ENCODE measurements at regions of chr15 and their contacts with region 1.

Region 1: GRCh38 chr15:60006203-60006862 is 2.2 kb downstream of the FOXB1 start:
- DNase-seq: peak; percentile 37 to 81 (median 69)
- ATAC-seq: peak; percentile 82
- H3K4me3 ChIP-seq: peak overlapping the region; percentile 49
- H3K4me3 Mint-ChIP-seq: peak overlapping the region; percentile 80 to 97 (median 90)
- H3K27ac ChIP-seq: no peak overlapping the region
- H3K27ac Mint-ChIP-seq: peak overlapping the region; percentile 52 to 97 (median 86)
- H3K4me1 ChIP-seq: peaks cover 23 to 27% of the 10 kb centered on the region in 2 donors
- H3K4me1 Mint-ChIP-seq: peaks cover 26 to 52% (median 40%) of the 10 kb centered on the region in 7 donors
- H3K27me3 ChIP-seq: peaks cover 30 to 76% of the 10 kb centered on the region in 2 donors
- H3K27me3 Mint-ChIP-seq: peaks cover 74 to 94% (median 89%) of the 10 kb centered on the region in 5 donors

Region 2: GRCh38 chr15:59797756-59798604 is 208.4 kb before region 1 on chr15:
- CTCF ChIA-PET with region 1: no interaction called
- POLR2A ChIA-PET with region 1: no interaction called
- intact Hi-C with region 1: loop called (anchors 2 kb)
- DNase-seq: no peak
- ATAC-seq: no peak
- H3K4me3 ChIP-seq: peak overlapping the region; percentile 4
- H3K4me3 Mint-ChIP-seq: peak overlapping the region; percentile 44 to 75 (median 62)
- H3K27ac ChIP-seq: peak overlapping the region; percentile 70
- H3K27ac Mint-ChIP-seq: peak overlapping the region; percentile 38 to 96 (median 92)
- H3K4me1 ChIP-seq: peaks cover 22 to 72% of the 10 kb centered on the region in 2 donors
- H3K4me1 Mint-ChIP-seq: peaks cover 28 to 97% (median 88%) of the 10 kb centered on the region in 7 donors
- H3K27me3 ChIP-seq: no peaks in the 10 kb centered on the region
- H3K27me3 Mint-ChIP-seq: peaks cover 0 to 27% (median 0%) of the 10 kb centered on the region in 5 donors

Region 3: GRCh38 chr15:59976480-59977271 is 29.7 kb before region 1 on chr15:
- CTCF ChIA-PET with region 1: no interaction called
- POLR2A ChIA-PET with region 1: interaction called, 4 read pairs
- intact Hi-C with region 1: loop called (anchors 1 kb)
- DNase-seq: peak in 8 of 9 donors; percentile 38 to 90 (median 86)
- ATAC-seq: peak; percentile 98
- H3K4me3 ChIP-seq: no peak overlapping the region
- H3K4me3 Mint-ChIP-seq: peak overlapping the region; percentile 12 to 83 (median 70)
- H3K27ac ChIP-seq: no peak overlapping the region
- H3K27ac Mint-ChIP-seq: peak overlapping the region in 8 of 9 donors; percentile 60 to 80 (median 74)
- H3K4me1 ChIP-seq: peaks cover 21 to 23% of the 10 kb centered on the region in 2 donors
- H3K4me1 Mint-ChIP-seq: peaks cover 13 to 43% (median 38%) of the 10 kb centered on the region in 7 donors
- H3K27me3 ChIP-seq: no peaks in the 10 kb centered on the region
- H3K27me3 Mint-ChIP-seq: peaks cover 0 to 27% (median 0%) of the 10 kb centered on the region in 5 donors

Region 4: GRCh38 chr15:60044636-60045270 is 38.4 kb after region 1 on chr15:
- CTCF ChIA-PET with region 1: no interaction called
- POLR2A ChIA-PET with region 1: no interaction called
- intact Hi-C with region 1: loop called in 1 of 2 experiments (anchors 5 kb)
- DNase-seq: peak in 8 of 9 donors; percentile 33 to 66 (median 45)
- ATAC-seq: peak; percentile 44
- H3K4me3 ChIP-seq: no peak overlapping the region
- H3K4me3 Mint-ChIP-seq: peak overlapping the region in 8 of 10 donors; percentile 21 to 78 (median 50)
- H3K27ac ChIP-seq: no peak overlapping the region
- H3K27ac Mint-ChIP-seq: peak overlapping the region in 5 of 9 donors; percentile 5 to 67 (median 27)
- H3K4me1 ChIP-seq: peaks cover 5% of the 10 kb centered on the region in 2 donors
- H3K4me1 Mint-ChIP-seq: peaks cover 3 to 23% (median 19%) of the 10 kb centered on the region in 7 donors
- H3K27me3 ChIP-seq: no peaks in the 10 kb centered on the region
- H3K27me3 Mint-ChIP-seq: peaks cover 0 to 15% (median 11%) of the 10 kb centered on the region in 5 donors

Region 5: GRCh38 chr15:60079210-60079609 is 72.9 kb after region 1 on chr15:
- CTCF ChIA-PET with region 1: no interaction called
- POLR2A ChIA-PET with region 1: no interaction called
- intact Hi-C with region 1: loop called in 1 of 2 experiments (anchors 5 kb)
- DNase-seq: peak in 1 of 9 donors; percentile 11
- ATAC-seq: no peak
- H3K4me3 ChIP-seq: no peak overlapping the region
- H3K4me3 Mint-ChIP-seq: no peak overlapping the region
- H3K27ac ChIP-seq: no peak overlapping the region
- H3K27ac Mint-ChIP-seq: no peak overlapping the region
- H3K4me1 ChIP-seq: peaks cover 4 to 14% of the 10 kb centered on the region in 2 donors
- H3K4me1 Mint-ChIP-seq: peaks cover 3 to 36% (median 25%) of the 10 kb centered on the region in 7 donors
- H3K27me3 ChIP-seq: no peaks in the 10 kb centered on the region
- H3K27me3 Mint-ChIP-seq: peaks cover 0 to 7% (median 5%) of the 10 kb centered on the region in 5 donors

Region 6: DNA sequence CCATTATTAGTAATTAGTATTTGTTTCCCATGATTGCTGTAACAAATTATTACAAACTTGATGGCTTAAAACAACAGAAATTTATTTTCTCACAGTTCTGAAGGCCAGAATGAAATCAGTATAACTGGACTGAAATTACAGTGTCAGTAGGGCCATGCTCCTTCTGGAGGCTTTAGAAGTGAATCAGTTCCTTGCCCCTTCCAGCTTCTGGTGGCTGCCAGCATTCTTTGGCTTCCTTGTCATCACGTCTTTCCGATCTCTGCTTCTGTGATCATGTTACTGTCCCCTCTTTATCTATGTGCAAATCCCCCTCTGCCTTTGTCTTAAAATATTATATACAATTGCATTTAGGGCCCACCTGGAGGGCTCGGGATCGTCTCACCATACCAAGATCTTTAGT is 89.8 kb after region 1 on chr15:
- CTCF ChIA-PET with region 1: no interaction called
- POLR2A ChIA-PET with region 1: no interaction called
- intact Hi-C with region 1: no loop called
- DNase-seq: no peak
- ATAC-seq: no peak
- H3K4me3 ChIP-seq: no peak overlapping the region
- H3K4me3 Mint-ChIP-seq: no peak overlapping the region
- H3K27ac ChIP-seq: no peak overlapping the region
- H3K27ac Mint-ChIP-seq: no peak overlapping the region
- H3K4me1 ChIP-seq: no peaks in the 10 kb centered on the region
- H3K4me1 Mint-ChIP-seq: peaks cover 0 to 6% (median 0%) of the 10 kb centered on the region in 7 donors
- H3K27me3 ChIP-seq: no peaks in the 10 kb centered on the region
- H3K27me3 Mint-ChIP-seq: peaks cover 0 to 29% (median 5%) of the 10 kb centered on the region in 5 donors

Region 7: DNA sequence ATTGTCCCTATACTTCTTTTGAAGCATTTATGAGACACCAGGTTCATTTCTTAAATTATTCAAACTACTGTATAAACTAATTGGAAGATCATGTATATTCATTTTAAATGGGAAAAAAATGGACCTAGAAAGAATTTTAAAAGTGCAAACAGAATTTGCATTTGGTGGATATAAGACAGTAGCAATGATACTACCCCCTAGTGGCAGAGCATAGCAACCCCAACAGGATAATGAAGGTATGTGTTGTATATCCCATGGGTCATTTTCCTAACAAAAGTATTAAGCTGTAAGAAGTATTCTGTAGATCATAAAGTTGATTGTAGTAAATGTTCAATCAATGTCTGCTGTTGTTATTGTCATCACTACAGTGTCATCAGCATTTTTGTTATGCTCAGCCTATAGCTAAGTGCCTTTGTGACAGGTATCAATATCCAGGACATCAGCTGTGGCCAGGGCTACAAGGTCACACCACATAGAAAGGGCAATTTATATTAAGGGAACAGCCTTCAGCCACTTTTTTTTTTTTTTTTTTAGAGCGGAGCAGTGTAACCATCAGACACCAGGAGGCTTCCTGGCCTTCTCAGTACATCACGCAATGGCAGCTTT is 173.6 kb after region 1 on chr15:
- CTCF ChIA-PET with region 1: no interaction called
- POLR2A ChIA-PET with region 1: no interaction called
- intact Hi-C with region 1: loop called in 1 of 2 experiments (anchors 5 kb)
- DNase-seq: peak in 7 of 9 donors; percentile 19 to 52 (median 41)
- ATAC-seq: peak; percentile 73
- H3K4me3 ChIP-seq: no peak overlapping the region
- H3K4me3 Mint-ChIP-seq: no peak overlapping the region
- H3K27ac ChIP-seq: no peak overlapping the region
- H3K27ac Mint-ChIP-seq: no peak overlapping the region
- H3K4me1 ChIP-seq: no peaks in the 10 kb centered on the region
- H3K4me1 Mint-ChIP-seq: no peaks in the 10 kb centered on the region
- H3K27me3 ChIP-seq: no peaks in the 10 kb centered on the region
- H3K27me3 Mint-ChIP-seq: peaks cover 2 to 49% (median 9%) of the 10 kb centered on the region in 5 donors